ENCODE measurements at regions of chr11 and their contacts with region 1.

Region 1: GRCh38 chr11:133163463-133164419 is 368.6 kb downstream of the OPCML start:
- DNase-seq: peak; percentile 67
- H3K4me3 ChIP-seq: no peak overlapping the region
- H3K27ac ChIP-seq: no peak overlapping the region
- H3K4me1 ChIP-seq: no peaks in the 10 kb centered on the region
- H3K27me3 ChIP-seq: peaks cover 6% of the 10 kb centered on the region
- CTCF ChIP-seq: peak; percentile 77

Region 2: DNA sequence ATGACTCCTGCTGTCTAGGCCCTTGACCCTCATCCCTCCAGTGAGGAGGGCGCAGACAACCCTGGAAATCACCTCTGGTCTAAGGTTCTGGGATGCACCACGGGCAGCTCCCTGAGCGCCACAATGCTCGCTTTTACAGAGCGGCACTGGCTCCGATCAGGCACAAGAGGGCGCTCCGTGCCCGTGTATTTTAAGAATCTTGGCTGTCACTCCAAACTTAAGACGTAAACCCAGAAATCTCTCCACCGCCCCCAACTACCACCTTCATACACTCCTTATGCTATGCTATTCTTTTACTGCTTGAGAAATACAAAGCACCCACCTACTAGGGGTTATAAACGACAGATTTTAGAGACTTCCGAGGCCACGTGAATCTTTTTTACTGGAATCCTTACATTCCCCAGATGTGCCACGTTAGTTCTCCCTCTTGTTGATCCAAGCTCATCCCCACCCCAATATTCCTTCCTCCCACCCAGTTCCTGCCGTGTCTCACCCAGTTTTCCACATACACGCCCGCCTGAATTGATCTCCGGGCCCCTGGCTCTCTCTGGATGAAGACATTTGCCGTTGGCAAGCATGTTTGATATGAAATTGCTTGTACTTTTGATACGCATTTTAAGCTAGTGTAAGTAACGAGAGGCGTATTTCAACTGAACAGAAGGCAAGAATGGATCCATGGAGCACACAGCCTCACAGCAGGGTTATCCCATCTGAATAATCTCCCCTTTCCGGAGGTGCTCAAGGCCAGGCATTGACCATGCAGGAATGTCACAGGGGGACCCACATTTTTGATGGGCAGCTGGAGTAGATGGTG is 84.9 kb before region 1 on chr11:
- CTCF ChIA-PET with region 1: no interaction called
- POLR2A ChIA-PET with region 1: no interaction called
- intact Hi-C with region 1: loop called (anchors 2 kb)
- DNase-seq: peak; percentile 71
- H3K4me3 ChIP-seq: no peak overlapping the region
- H3K27ac ChIP-seq: no peak overlapping the region
- H3K4me1 ChIP-seq: no peaks in the 10 kb centered on the region
- H3K27me3 ChIP-seq: peaks cover 45% of the 10 kb centered on the region
- CTCF ChIP-seq: peak; percentile 94

Region 3: DNA sequence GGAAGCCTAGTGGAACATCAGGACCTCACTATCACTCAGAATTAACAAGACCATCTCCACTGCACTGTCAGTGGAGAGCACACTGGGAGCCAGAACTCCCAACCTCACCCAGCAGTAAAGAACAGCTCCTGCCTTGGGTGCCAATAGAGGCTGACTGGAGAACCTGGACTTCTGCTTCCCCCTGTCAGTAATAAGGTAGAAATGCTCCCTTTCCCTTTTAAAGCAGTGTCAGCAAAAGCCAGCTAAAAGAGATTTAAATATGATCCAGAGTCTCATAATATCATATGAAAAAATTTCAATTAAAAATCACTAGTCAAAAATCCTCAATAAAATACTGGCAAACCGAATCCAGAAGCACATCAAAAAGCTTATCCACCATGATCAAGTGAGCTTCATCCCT is 598.8 kb after region 1 on chr11:
- CTCF ChIA-PET with region 1: no interaction called
- POLR2A ChIA-PET with region 1: interaction called, 14 read pairs
- intact Hi-C with region 1: no loop called
- DNase-seq: no peak
- H3K4me3 ChIP-seq: no peak overlapping the region
- H3K27ac ChIP-seq: no peak overlapping the region
- H3K4me1 ChIP-seq: no peaks in the 10 kb centered on the region
- H3K27me3 ChIP-seq: no peaks in the 10 kb centered on the region
- CTCF ChIP-seq: no peak